ENCODE measurements at regions of chr10 and their contacts with region 1.

Region 1: GRCh38 chr10:80064120-80064886 is 14.2 kb upstream of the TMEM254 start:
- DNase-seq: no peak

Region 2: DNA sequence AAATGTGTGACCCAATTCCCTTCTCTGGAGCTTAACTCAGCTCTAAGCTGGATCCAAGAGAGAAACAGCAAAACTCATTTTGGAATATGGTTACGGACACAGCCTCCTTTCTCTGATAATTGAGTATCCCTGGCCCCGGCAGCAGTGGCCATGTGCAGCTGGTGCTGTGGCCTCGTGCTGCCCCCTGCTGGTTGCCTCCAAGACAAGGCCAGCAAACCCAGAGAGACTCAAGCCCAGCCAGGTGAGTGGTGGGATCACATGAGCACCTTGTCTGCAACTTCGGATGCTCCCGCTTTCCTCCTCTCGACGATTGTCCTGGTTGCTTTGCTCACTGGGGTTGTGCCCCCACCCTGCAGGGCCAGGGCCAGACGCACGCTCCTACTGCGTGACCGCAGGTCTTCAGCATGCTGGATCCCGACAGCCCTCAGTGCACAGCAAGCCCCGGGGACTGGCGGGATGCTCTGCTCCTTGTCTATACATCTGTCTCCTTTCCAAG is 134.8 kb before region 1 on chr10:
- CTCF ChIA-PET with region 1: no interaction called
- POLR2A ChIA-PET with region 1: no interaction called
- DNase-seq: peak; percentile 83

Region 3: DNA sequence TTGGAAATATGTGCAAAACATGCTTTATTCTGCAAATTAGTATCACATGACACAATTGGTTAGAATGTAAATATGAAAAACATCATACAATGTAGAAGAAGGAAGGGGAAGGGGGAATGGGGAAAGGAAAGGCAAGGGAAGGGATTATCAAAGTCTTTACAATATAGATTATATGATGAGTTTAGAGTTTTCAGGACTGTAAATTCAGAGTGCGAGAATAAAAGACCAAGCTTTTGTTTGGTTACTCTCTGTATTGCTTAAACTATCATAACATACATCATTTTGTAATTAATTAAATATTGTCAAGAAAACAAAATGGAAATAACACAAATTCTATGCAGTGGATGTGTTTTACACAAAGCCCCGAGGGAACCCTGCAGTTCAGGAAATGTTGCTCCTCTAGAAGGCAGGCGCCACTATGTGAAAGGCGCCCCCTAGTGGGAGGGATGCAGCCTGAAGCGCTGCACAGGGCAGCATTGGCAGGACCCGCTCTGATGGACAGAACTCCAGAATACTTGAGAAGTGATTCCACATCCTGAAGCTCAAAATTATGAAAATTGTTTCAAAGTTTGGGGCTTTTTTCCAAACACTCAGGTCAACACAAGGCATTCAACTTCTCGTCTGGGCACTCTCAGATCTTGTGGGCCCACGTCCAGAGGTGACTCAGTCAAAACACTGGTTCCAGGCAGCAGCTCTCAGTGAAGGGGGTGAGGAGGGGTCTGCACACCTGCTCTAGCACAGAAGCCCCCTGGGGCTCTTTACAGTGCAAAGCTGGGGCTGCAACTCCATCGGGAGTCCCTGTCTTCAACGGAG is 17.5 kb before region 1 on chr10:
- CTCF ChIA-PET with region 1: interaction called, 17 read pairs
- POLR2A ChIA-PET with region 1: no interaction called
- DNase-seq: peak; percentile 78

Measured in HEK293T (cell line).